A673 (cell line): ENCODE measurements at regions of chr3 and their contacts with region 1.

Region 1: GRCh38 chr3:1987980-1988379 is 110.7 kb upstream of the CNTN4 start:
- DNase-seq: no peak
- H3K4me3 ChIP-seq: no peak overlapping the region
- H3K27ac ChIP-seq: no peak overlapping the region
- H3K4me1 ChIP-seq: no peaks in the 10 kb centered on the region
- H3K27me3 ChIP-seq: no peaks in the 10 kb centered on the region
- CTCF ChIP-seq: peak; percentile 43

Region 2: GRCh38 chr3:1082108-1082507 is 905.9 kb before region 1 on chr3:
- CTCF ChIA-PET with region 1: no interaction called
- POLR2A ChIA-PET with region 1: no interaction called
- intact Hi-C with region 1: loop called (anchors 10 kb)
- DNase-seq: peak; percentile 40
- H3K4me3 ChIP-seq: no peak overlapping the region
- H3K27ac ChIP-seq: no peak overlapping the region
- H3K4me1 ChIP-seq: peaks cover 8% of the 10 kb centered on the region
- H3K27me3 ChIP-seq: no peaks in the 10 kb centered on the region
- CTCF ChIP-seq: peak; percentile 69